BJ (cell line): ENCODE measurements at regions of chr15 and their contacts with region 1.

Region 1: DNA sequence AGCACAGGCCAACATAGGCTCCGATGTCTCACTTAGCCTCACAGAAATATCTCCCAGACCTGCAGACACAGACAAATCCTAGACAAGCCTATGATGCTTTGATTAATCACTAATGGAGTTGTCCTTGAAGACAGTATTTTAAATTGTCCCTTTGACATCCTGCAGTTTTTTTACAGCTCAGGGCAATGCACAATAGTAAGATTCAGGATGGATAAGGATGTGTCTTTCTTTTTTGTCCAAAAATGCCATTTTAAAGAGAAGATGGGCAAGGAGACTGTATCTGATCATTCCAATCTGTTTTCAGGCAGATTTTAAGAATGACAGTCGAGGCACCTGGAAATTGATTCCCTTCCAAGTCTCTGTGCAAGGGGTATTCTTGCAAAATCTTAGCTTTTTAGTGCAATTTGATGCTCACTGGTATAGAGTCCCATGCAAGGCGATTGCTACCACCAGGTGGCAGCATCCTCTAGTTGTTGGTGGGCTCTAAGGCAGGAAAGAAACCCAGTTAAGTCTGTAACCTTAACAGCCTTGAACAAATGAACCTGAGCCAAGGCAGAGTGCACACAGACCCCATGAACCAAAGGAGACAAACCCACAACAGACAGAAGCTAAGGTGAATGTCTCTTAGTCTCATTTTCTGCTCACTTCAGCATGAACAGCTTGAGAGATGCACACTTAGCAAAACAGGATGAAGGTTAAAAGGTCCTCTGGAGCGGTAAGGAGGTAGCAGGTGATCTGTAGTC is 51.2 kb upstream of the MINAR1 start:
- DNase-seq: peak; percentile 9
- H3K4me3 ChIP-seq: no peak overlapping the region
- H3K27me3 ChIP-seq: no peaks in the 10 kb centered on the region
- CTCF ChIP-seq: peak; percentile 89

Region 2: DNA sequence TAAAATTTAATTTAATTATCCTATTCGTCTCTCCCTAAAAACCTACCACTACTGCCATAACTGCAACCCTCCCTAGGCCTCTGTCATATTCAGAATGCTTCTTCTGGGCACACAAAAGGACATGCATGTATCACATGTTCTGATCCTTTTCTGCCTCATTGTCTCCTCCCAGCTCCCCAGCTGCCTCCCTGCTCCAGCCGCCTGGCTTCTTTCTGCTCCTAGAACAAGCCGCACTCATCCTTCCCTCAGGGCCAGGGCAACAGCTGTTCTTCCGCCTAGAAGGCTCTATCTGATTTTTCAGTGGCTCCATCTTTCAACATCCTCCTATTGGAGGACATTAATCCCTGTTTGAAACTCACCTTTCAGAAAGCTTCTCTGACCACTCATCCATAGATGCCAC is 31.4 kb before region 1 on chr15:
- CTCF ChIA-PET with region 1: interaction called, 10 read pairs
- POLR2A ChIA-PET with region 1: no interaction called
- DNase-seq: no peak
- H3K4me3 ChIP-seq: no peak overlapping the region
- H3K27me3 ChIP-seq: no peaks in the 10 kb centered on the region
- CTCF ChIP-seq: no peak

Region 3: GRCh38 chr15:79394231-79394630 is 13.3 kb after region 1 on chr15:
- CTCF ChIA-PET with region 1: interaction called, 46 read pairs
- POLR2A ChIA-PET with region 1: no interaction called
- DNase-seq: peak; percentile 21
- H3K4me3 ChIP-seq: no peak overlapping the region
- H3K27me3 ChIP-seq: no peaks in the 10 kb centered on the region
- CTCF ChIP-seq: no peak

Region 4: DNA sequence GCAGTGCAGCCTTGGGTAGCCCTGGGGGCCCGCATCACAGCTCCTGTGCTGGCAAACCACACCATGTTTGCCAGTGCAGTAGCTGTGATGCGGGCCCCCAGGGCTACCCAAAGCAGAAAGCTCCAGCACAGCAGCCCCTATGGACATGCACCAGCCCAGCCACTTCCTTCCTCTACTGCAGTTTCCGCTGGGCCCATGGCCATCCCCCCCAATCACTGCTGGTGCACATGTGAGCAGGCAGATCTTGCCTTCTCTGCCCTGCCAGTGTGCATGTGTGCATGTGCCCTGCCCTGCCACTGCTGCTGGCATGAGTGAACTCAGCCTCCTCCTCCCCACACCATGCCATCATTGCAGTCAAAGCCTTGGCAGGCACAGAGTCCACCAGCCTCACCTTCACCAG is 31.1 kb after region 1 on chr15:
- CTCF ChIA-PET with region 1: no interaction called
- POLR2A ChIA-PET with region 1: no interaction called
- DNase-seq: no peak
- H3K4me3 ChIP-seq: no peak overlapping the region
- H3K27me3 ChIP-seq: no peaks in the 10 kb centered on the region
- CTCF ChIP-seq: no peak

Region 5: DNA sequence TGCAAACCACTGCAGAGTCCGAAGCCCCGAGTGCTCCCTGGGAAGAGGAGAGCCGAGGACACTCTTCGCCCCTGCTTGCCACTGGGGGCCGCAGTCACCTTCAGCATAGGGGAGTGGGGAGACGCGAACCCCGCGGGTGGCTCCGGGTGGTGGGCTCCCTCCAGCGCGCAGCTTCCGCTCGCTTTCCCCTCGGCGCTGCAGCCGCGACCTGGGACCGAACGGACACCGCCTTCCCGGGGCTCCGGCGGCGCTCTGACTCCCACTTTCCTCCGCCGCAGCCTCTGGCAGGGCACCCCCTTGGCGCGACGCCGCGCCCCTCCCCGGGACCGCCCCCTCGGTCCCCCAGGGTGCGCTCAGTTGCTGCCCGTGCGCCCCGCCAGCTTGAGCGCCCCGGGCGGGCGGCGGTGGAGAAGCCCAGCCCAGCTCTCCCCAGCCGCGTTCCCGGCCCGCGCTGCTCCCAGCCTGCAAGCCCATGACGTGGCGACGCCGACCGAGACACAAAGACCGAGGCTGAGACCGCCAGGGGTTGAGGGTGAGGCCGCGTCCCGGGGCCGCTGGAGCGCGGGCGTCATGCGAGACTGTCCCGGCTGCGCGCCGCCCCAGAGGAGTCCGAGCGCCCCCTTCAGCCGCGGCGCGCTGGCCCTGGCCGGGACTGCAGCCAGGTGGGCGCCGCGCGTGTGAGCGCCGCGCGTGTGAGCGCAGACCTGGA is 50.9 kb after region 1 on chr15 and contains the start of gene MINAR1:
- CTCF ChIA-PET with region 1: interaction called, 28 read pairs
- POLR2A ChIA-PET with region 1: no interaction called
- DNase-seq: no peak
- H3K4me3 ChIP-seq: peak within 1 kb of the TSS; percentile 49
- H3K27me3 ChIP-seq: peaks cover 11% of the 10 kb centered on the region
- CTCF ChIP-seq: peak; percentile 26; the same call in 1 of the 2 replicates
- polyA plus RNA-seq, gene MINAR1: 0.37 and 0.43 TPM in 2 replicates

Region 6: DNA sequence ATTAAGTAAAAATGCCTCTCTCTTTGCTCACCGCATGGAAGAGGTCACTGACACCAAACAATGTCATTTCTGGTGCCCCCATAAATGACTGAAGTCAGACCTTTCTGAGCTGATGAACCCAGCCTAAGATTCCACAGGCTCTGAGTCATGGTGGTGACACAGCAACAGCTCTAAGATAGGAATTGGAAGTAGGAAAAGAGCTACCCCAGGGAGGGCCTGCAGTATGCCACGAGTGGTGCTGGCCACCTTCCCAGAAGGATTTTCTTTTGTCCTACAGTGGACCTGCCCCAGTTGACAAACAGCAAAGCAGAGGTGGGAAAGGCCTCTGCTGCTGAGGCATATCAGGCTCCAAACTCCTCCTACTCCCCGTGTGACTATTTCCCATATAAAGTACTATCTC is 259.3 kb after region 1 on chr15:
- CTCF ChIA-PET with region 1: no interaction called
- POLR2A ChIA-PET with region 1: no interaction called
- DNase-seq: peak; percentile 69
- H3K4me3 ChIP-seq: no peak overlapping the region
- H3K27me3 ChIP-seq: no peaks in the 10 kb centered on the region
- CTCF ChIP-seq: no peak

Region 7: GRCh38 chr15:79844221-79844620 is 463.3 kb after region 1 on chr15:
- CTCF ChIA-PET with region 1: interaction called, 244 read pairs
- POLR2A ChIA-PET with region 1: no interaction called
- DNase-seq: no peak
- H3K4me3 ChIP-seq: no peak overlapping the region
- H3K27me3 ChIP-seq: no peaks in the 10 kb centered on the region
- CTCF ChIP-seq: no peak

Region 8: DNA sequence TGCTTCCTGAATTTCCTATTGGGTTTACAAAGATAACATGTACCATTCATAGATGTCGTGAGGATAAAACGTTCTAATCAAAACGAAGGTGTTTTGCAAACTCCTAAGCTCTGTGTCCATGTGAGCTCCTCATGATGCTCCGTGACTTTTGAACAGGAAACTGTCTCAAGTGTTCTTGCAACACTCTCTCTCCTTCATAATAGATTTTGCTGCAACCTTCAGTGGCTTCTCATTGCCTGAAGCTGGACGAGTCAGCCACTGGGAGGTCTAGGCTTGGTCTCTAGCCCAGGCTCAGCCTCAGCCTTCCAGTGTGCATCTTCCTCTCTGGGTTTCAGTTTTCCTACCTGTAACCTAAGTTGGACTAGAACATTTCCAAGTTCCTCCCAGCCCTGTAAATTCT is 608.8 kb after region 1 on chr15:
- CTCF ChIA-PET with region 1: interaction called, 12 read pairs
- POLR2A ChIA-PET with region 1: no interaction called
- DNase-seq: no peak
- H3K4me3 ChIP-seq: no peak overlapping the region
- H3K27me3 ChIP-seq: peaks cover 1% of the 10 kb centered on the region; the same call in 1 of the 2 replicates
- CTCF ChIP-seq: no peak